Activated naive CD4-positive, alpha-beta T cell treated with anti-CD3 and anti-CD28 coated beads for 36 hours (primary cell): ENCODE measurements at regions of chr5 and their contacts with region 1.

Region 1: DNA sequence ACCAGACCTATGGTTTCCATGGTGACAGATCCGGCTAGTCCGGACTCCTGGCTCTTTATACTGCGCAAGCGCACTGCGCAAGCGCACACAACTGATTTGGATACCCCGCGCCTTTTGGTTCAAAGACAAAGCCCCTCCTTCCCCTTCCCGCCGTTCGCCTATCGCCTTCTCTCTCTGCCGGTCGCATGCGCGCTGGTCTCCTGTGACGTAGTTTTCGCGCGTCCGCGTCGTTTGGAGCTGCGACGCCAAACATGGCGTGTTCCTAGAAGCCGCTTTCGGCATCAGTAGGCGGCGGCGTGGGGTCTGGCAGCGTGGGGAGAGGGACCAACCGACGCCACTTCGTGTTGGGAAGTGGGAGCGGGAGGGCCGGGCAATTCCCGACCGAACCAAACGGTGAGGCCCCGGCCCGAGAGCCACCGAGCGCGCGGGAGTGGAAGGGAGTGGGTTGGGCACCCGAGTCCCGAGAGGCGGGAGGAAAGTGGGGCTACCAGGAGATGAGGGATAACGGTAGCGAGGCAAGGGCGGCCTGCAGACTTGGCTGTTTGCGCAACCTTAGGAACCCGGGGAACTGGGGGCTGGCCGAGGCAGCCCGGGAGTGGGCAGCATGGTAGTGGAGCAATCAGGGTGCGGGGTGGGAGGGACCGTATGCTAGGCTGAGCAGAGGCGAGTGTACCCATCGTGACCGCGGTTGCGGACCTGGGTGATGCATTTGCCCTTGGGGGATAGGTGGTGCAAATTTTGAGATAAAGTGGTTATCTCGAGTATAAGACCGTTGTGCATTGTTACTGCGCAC is at the start of gene IPO11:
- DNase-seq: peak; percentile 99
- H3K4me3 Mint-ChIP-seq: peak within 1 kb of the TSS; percentile 88
- H3K27ac Mint-ChIP-seq: peak within 1 kb of the TSS; percentile 86
- H3K4me1 Mint-ChIP-seq: peaks cover 26% of the 10 kb centered on the region
- H3K27me3 Mint-ChIP-seq: no peaks in the 10 kb centered on the region
- total RNA-seq, gene IPO11: 54.8 to 57.2 TPM

Region 2: DNA sequence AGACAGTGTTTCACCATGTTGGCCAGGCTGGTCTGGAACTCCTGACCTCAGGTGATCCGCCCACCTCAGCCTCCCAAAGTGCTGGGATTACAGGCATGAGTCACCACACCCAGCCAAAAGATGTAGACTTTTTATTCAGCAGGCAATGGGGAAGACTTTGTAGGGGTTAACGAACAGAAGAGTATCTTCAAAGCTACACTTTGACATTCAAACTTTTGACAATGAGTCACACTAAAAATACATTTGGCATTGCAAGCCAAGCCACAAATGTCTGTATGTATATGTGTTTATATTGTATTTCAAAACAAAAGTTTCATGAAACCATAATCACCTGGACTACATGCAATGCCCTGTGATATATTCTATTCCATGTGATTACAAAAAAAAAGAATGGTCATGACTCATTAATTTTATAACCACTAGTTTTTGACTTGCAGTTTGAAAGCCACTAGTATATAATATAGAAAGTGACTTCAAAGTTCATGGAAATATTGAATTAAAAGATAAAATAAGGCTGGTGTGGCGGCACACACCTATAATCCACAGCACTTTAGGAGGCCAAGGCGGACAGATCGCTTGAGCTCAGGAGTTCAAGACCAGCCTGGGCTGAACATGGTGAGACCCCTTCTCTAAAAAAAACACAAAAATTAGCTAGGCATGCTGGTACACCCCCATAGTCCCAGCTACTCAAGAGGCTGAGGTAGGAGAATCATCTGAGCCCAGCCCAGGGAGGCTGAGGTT is 17.4 kb before region 1 on chr5:
- CTCF ChIA-PET with region 1: no interaction called
- intact Hi-C with region 1: loop called (anchors 1 kb)
- DNase-seq: no peak
- H3K4me3 Mint-ChIP-seq: no peak overlapping the region
- H3K27ac Mint-ChIP-seq: peak overlapping the region; percentile 72
- H3K4me1 Mint-ChIP-seq: peaks cover 39% of the 10 kb centered on the region
- H3K27me3 Mint-ChIP-seq: no peaks in the 10 kb centered on the region

Region 3: DNA sequence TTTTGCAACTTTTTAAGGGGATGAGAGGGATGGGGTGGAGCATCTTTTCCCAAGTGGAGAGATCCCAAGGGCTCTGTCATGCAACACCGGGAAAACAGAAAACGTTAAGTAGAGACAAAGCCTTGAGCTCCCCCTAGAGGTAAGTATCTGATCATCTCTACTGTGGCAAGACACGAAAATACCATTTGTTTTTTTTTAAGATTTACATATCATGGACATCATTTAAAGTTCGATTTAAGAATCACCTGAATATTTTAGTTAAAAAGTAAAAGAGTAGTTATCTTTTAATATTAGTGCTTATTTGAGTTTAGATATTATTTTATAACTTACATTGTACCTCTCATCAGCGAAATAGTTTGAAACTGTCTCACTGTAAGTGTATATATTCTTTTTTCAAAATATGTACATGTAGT is 366.3 kb after region 1 on chr5:
- CTCF ChIA-PET with region 1: no interaction called
- intact Hi-C with region 1: no loop called
- DNase-seq: no peak
- H3K4me3 Mint-ChIP-seq: no peak overlapping the region
- H3K27ac Mint-ChIP-seq: no peak overlapping the region
- H3K4me1 Mint-ChIP-seq: no peaks in the 10 kb centered on the region
- H3K27me3 Mint-ChIP-seq: no peaks in the 10 kb centered on the region

Region 4: DNA sequence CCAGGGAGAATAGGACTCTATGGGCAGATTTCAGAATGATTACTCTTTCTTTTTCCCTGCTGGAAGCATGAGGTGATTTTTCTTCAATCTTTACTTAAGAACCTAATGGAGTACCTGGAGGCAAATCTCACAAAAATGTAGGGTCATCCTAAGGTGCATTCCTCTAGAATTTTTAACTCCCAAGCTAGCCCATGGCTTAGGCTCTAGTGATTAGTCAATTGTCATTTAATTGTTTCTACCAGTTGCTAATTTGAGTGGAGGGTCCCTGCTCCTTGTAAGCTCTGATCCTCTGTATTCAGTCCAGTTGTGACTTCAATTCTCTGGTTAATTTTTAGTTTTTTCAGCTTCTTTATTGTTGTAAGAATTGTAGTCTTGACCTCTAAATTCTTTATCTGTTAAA is 1082.5 kb after region 1 on chr5:
- CTCF ChIA-PET with region 1: no interaction called
- intact Hi-C with region 1: no loop called
- DNase-seq: no peak
- H3K4me3 Mint-ChIP-seq: no peak overlapping the region
- H3K27ac Mint-ChIP-seq: no peak overlapping the region
- H3K4me1 Mint-ChIP-seq: no peaks in the 10 kb centered on the region
- H3K27me3 Mint-ChIP-seq: no peaks in the 10 kb centered on the region